Motor neuron (in vitro differentiated cells): ENCODE measurements at regions of chrX and their contacts with region 1.

Region 1: DNA sequence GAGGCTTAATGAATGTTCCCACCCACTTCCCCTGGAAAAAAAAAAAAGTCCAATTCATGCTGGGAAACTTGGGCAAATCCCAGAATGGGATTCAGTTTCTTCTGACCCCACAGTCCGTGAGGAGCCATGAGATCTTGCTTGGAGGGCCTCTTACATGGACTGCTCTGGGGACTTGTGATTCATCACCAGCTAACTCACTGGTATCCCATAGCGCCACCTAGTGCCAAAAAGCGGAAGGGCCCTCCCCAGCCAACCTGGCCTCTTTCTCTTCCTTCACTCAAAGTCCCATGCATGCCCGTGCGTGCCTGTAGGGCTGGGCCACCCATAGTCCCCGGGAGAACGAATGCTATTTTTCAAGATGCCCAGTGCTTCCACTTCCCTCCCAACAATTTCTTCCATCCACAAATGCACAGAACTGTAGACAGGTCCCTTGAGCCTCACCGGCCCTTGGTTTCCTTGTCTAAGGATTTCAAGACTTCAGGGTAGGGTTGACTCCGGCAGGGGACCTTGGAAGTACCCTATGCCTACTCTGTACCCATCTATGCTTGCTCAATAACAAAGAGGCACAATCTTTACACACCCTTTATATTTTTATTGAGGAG is 5.1 kb downstream of the RTL5 start:
- ATAC-seq: peak; percentile 50 to 88 (median 73)
- H3K4me3 ChIP-seq: peak overlapping the region in 1 of 5 donors; percentile 15
- H3K27ac ChIP-seq: no peak overlapping the region
- H3K4me1 ChIP-seq: peaks cover 51 to 56% of the 10 kb centered on the region in 2 donors

Region 2: DNA sequence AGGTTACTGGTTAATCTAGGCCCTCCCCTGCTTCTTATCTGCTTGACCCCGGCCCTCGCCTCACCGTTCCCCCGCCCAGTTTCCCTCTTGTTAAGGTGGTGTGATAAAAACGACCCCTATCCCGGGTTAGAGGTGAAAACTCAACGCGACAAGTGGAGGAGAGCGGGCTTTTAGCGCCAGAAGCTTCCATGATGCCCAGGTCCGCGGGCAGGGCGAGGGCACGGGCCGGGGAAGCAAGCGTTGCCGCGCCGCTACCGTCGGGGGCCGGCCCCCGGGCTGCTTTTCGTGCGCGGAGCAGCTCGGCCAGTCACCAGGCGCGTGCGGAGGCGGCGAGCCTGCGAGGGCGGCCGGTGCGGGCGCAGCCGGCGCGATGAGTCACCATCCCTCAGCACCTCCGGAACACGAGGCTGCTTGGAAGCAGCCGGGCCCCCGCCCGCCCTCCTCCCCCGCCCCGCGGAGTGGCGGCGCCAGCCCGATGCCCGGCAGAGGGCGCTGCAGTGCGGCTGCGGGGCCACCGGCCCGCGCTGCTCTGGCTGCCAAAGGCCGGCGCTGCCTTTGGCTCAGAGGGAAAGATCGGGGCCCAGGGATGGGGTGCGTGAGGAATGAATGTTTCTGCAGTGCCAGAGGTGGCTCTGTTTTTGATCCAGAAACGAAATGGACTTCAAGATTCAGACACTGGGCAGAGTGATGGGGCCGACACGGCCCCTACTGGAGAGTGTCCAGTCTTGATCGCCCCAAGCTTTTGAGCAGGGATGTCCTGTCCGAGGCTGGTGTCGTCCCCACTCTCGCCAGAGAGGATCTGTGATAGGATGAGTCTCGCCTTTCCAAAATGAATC is 108.1 kb before region 1 on chrX:
- in situ Hi-C with region 1: loop called in 1 of 9 experiments (anchors 25 kb)
- ATAC-seq: peak; percentile 95 to 99 (median 99)
- H3K4me3 ChIP-seq: peak overlapping the region in 3 of 5 donors; percentile 0 to 19 (median 2)
- H3K27ac ChIP-seq: peak overlapping the region; percentile 23 to 71
- H3K4me1 ChIP-seq: peaks cover 5 to 7% of the 10 kb centered on the region in 2 donors

Region 3: GRCh38 chrX:72366613-72367454 is 240.2 kb after region 1 on chrX:
- in situ Hi-C with region 1: no loop called
- ATAC-seq: peak; percentile 77 to 88 (median 82)
- H3K4me3 ChIP-seq: no peak overlapping the region
- H3K27ac ChIP-seq: no peak overlapping the region
- H3K4me1 ChIP-seq: peaks cover 3 to 5% of the 10 kb centered on the region in 2 donors